MCF 10A (cell line): ENCODE measurements at regions of chr1 and their contacts with region 1.

Region 1: DNA sequence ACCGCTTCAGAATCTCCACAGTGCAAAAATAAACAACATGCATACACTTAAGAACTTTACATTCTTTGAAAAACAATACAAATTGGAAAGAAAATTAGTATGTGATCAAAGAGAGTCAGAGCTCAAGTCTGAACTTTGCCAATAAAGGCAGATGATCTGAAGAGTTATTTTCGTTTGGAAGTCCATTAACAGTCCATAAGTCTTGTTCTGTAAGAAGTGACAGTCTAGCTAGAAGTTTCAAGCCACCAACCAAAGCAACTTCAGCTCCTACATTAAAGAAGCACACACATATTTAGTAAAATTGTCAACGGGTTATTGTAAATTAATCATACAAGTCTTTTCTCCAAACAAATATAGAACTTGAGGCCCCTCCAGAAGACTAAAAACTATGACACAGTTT is 20.7 kb downstream of the ANGEL2 start:
- DNase-seq: no peak
- H3K4me3 Mint-ChIP-seq: no peak overlapping the region
- H3K27ac Mint-ChIP-seq: no peak overlapping the region
- H3K4me1 Mint-ChIP-seq: no peaks in the 10 kb centered on the region
- H3K27me3 Mint-ChIP-seq: no peaks in the 10 kb centered on the region
- CTCF ChIP-seq: no peak

Region 2: DNA sequence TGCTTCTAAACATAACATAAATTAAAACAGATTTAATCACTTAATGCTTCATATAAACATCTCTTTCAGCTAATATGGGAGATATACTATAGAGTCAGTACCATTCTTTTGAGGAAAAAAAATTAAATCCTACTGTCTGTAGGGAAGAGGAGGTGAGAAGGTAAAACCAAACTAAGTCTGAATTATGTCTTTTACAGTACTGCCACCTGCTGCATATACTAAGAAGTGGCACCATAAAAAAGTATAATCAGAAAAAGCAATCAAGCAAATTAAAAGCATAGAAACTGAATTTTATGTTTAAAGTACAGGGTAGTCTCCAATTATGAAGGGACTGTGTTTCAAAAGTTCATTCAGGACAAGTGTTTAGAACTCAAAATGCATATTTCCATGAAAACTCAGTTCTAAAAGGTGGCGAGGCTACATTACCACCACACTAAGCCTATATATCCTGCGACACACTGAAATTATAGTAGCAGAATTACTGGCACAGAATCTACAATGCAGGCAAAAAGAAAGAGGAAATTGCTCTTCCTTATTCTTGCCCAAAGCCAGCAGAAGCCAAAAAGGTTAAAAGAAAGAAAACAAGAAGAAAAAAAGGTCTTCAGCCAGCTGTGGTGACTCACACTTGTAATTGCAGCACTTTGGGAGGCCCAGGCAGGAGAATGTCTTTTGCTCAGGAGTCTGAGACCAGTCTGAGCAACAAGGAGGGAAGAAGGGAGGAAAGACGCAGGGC is 212.3 kb before region 1 on chr1:
- CTCF ChIA-PET with region 1: interaction called, 4 read pairs
- POLR2A ChIA-PET with region 1: no interaction called
- intact Hi-C with region 1: loop called (anchors 2 kb)
- DNase-seq: peak; percentile 58
- H3K4me3 Mint-ChIP-seq: no peak overlapping the region
- H3K27ac Mint-ChIP-seq: peak overlapping the region; percentile 57
- H3K4me1 Mint-ChIP-seq: peaks cover 7% of the 10 kb centered on the region
- H3K27me3 Mint-ChIP-seq: no peaks in the 10 kb centered on the region
- CTCF ChIP-seq: peak; percentile 84

Region 3: DNA sequence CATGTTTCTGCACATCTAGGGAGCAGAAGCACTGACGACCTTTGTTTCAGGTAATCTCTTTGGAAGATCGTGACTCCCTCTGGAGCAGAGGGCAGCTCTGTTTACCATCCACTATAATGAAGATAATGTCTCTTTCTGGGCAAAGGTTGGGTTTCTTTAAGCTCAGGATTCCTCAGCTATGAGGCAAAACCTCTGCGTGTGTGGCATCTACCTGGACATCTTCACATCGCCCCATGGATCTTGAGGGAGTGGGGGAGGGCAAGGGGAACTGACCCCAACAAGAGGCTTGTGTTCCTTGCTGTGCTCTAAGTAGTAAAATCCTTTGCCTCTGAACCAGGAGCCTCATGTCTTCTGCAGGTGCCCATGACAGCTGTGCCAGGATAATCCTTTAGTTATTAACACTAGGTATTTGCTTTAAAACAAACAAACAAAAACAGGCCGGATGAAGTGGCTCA is 167.1 kb before region 1 on chr1:
- CTCF ChIA-PET with region 1: interaction called, 13 read pairs
- POLR2A ChIA-PET with region 1: no interaction called
- intact Hi-C with region 1: no loop called
- DNase-seq: no peak
- H3K4me3 Mint-ChIP-seq: no peak overlapping the region
- H3K27ac Mint-ChIP-seq: no peak overlapping the region
- H3K4me1 Mint-ChIP-seq: no peaks in the 10 kb centered on the region
- H3K27me3 Mint-ChIP-seq: no peaks in the 10 kb centered on the region
- CTCF ChIP-seq: no peak

Region 4: DNA sequence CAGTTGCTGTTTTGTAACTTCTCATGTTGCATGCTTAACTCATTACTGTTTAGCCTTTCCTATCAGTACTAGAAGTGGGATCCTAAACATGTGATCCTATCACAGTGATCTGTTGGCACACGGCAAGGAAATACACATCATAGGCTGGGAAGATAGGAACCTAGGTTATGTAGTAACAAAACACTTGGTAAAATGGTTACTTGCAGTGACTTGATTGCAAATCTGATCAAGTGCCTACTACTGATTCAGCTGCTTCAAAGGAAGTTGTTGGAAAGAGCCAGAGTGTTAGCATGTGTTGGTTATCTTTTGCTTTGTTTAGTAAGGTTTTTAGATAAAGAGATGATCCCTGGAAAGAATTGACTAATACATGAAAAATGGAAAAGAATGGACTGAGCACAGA is 53.5 kb before region 1 on chr1:
- CTCF ChIA-PET with region 1: interaction called, 11 read pairs
- POLR2A ChIA-PET with region 1: no interaction called
- intact Hi-C with region 1: no loop called
- DNase-seq: no peak
- H3K4me3 Mint-ChIP-seq: no peak overlapping the region
- H3K27ac Mint-ChIP-seq: no peak overlapping the region
- H3K4me1 Mint-ChIP-seq: no peaks in the 10 kb centered on the region
- H3K27me3 Mint-ChIP-seq: no peaks in the 10 kb centered on the region
- CTCF ChIP-seq: no peak

Region 5: DNA sequence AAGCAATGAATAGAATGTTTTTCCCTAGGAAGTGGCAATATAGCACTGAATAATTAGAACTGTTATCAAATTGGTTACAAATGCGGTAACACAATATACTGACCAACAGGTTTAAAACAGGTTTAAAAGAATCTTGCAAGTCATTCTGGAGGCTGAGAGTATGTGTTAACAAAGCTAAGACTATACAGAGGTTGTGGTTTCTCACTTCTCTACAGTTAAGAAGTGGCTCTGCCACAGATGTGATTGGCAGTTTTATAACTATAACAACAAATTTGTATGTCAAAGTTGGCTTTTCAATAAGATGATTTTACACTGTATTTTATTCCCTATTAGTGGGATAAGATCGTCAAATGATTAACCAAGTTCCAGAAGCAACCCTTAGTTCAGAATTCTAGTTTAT is 13.6 kb after region 1 on chr1:
- CTCF ChIA-PET with region 1: interaction called, 73 read pairs
- POLR2A ChIA-PET with region 1: no interaction called
- intact Hi-C with region 1: no loop called
- DNase-seq: no peak
- H3K4me3 Mint-ChIP-seq: no peak overlapping the region
- H3K27ac Mint-ChIP-seq: no peak overlapping the region
- H3K4me1 Mint-ChIP-seq: peaks cover 8% of the 10 kb centered on the region
- H3K27me3 Mint-ChIP-seq: no peaks in the 10 kb centered on the region
- CTCF ChIP-seq: no peak

Region 6: GRCh38 chr1:213122514-213122929 is 127.6 kb after region 1 on chr1:
- CTCF ChIA-PET with region 1: no interaction called
- POLR2A ChIA-PET with region 1: no interaction called
- intact Hi-C with region 1: no loop called
- DNase-seq: peak; percentile 75
- H3K4me3 Mint-ChIP-seq: no peak overlapping the region
- H3K27ac Mint-ChIP-seq: peak overlapping the region; percentile 61
- H3K4me1 Mint-ChIP-seq: peaks cover 26% of the 10 kb centered on the region
- H3K27me3 Mint-ChIP-seq: no peaks in the 10 kb centered on the region
- CTCF ChIP-seq: peak; percentile 74